H1 (cell line): ENCODE measurements at regions of chr15 and their contacts with region 1.

Region 1: GRCh38 chr15:79853458-79854328 is 43.1 kb downstream of the MTHFS start:
- DNase-seq: peak; percentile 54 to 59
- H3K4me3 ChIP-seq: no peak overlapping the region
- H3K27ac ChIP-seq: no peak overlapping the region
- H3K4me1 ChIP-seq: no peaks in the 10 kb centered on the region
- H3K27me3 ChIP-seq: no peaks in the 10 kb centered on the region
- CTCF ChIP-seq: peak; percentile 84 to 98 (median 85)
- EP300 ChIP-seq: no peak
- POLR2A ChIP-seq: no peak
- RAD21 ChIP-seq: peak; percentile 78 to 81

Region 2: DNA sequence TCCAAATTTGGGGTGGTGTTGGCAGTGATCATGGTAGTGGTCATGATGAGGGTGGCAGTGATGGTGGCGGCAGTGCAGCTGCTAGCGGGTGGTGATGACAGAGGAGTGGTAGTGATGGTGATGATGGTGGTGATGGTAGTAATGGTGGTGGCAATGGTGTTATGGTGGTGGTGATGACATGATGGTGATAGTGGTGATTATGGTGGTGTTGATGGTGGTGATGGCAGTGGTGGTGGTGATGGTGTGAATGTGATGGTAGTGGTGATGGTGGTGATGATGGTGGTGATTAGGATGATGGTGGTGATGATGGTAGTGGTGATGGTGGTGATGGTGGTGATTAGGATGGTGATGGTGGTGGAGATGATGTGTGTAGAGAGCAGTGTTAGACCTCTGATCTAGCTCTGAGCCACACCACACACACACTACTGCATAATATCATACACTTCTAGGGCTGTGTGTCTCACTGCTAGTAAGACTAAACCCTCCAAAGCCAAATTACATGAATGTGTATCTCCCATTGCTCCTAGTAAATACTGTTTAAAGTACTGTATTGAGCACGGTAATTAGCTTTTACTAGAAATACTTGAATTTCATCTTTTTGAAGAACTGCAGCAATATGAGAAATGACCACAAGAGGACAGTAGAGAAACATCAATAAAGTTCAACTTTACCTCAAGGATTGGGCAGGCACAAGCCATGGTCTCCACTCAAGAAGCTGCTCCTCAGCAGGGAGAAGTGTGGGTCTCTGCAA is 514.0 kb before region 1 on chr15:
- CTCF ChIA-PET with region 1: interaction called, 27 read pairs
- POLR2A ChIA-PET with region 1: no interaction called
- DNase-seq: no peak
- H3K4me3 ChIP-seq: no peak overlapping the region
- H3K27ac ChIP-seq: no peak overlapping the region
- H3K4me1 ChIP-seq: no peaks in the 10 kb centered on the region
- H3K27me3 ChIP-seq: no peaks in the 10 kb centered on the region
- CTCF ChIP-seq: peak in 2 of 3 experiments; percentile 64 to 78; a peak in 2 of 4 replicates
- EP300 ChIP-seq: no peak
- POLR2A ChIP-seq: no peak
- RAD21 ChIP-seq: peak; percentile 82 to 86

Region 3: GRCh38 chr15:79769069-79769481 is 84.6 kb before region 1 on chr15:
- CTCF ChIA-PET with region 1: interaction called, 14 read pairs
- POLR2A ChIA-PET with region 1: no interaction called
- DNase-seq: no peak
- H3K4me3 ChIP-seq: no peak overlapping the region
- H3K27ac ChIP-seq: no peak overlapping the region
- H3K4me1 ChIP-seq: 0 out of 7 replicates have a peak, but pooled peaks cover 0 to 2% (median 0%) of the 10 kb centered on the region in 4 experiments
- H3K27me3 ChIP-seq: no peaks in the 10 kb centered on the region
- CTCF ChIP-seq: peak; percentile 31 to 50 (median 48)
- EP300 ChIP-seq: no peak
- POLR2A ChIP-seq: no peak
- RAD21 ChIP-seq: peak; percentile 60 to 70

Region 4: GRCh38 chr15:79831604-79832003 is 22.1 kb before region 1 on chr15:
- CTCF ChIA-PET with region 1: interaction called, 23 read pairs
- POLR2A ChIA-PET with region 1: no interaction called
- DNase-seq: no peak
- H3K4me3 ChIP-seq: no peak overlapping the region
- H3K27ac ChIP-seq: no peak overlapping the region
- H3K4me1 ChIP-seq: no peaks in the 10 kb centered on the region
- H3K27me3 ChIP-seq: no peaks in the 10 kb centered on the region
- CTCF ChIP-seq: no peak
- EP300 ChIP-seq: no peak
- POLR2A ChIP-seq: no peak
- RAD21 ChIP-seq: no peak

Region 5: GRCh38 chr15:79837846-79838245 is 15.8 kb before region 1 on chr15:
- CTCF ChIA-PET with region 1: interaction called, 26 read pairs
- POLR2A ChIA-PET with region 1: interaction called, 4 read pairs
- DNase-seq: no peak
- H3K4me3 ChIP-seq: no peak overlapping the region
- H3K27ac ChIP-seq: no peak overlapping the region
- H3K4me1 ChIP-seq: no peaks in the 10 kb centered on the region
- H3K27me3 ChIP-seq: no peaks in the 10 kb centered on the region
- CTCF ChIP-seq: no peak
- EP300 ChIP-seq: no peak
- POLR2A ChIP-seq: no peak
- RAD21 ChIP-seq: no peak

Region 6: GRCh38 chr15:79872358-79873017 is 18.8 kb after region 1 on chr15:
- CTCF ChIA-PET with region 1: interaction called, 16 read pairs
- POLR2A ChIA-PET with region 1: no interaction called
- DNase-seq: no peak
- H3K4me3 ChIP-seq: no peak overlapping the region
- H3K27ac ChIP-seq: no peak overlapping the region
- H3K4me1 ChIP-seq: no peaks in the 10 kb centered on the region
- H3K27me3 ChIP-seq: no peaks in the 10 kb centered on the region
- CTCF ChIP-seq: no peak
- EP300 ChIP-seq: no peak
- POLR2A ChIP-seq: no peak
- RAD21 ChIP-seq: no peak